CD4-positive, alpha-beta T cell (primary cell): ENCODE measurements at regions of chr3 and their contacts with region 1.

Region 1: DNA sequence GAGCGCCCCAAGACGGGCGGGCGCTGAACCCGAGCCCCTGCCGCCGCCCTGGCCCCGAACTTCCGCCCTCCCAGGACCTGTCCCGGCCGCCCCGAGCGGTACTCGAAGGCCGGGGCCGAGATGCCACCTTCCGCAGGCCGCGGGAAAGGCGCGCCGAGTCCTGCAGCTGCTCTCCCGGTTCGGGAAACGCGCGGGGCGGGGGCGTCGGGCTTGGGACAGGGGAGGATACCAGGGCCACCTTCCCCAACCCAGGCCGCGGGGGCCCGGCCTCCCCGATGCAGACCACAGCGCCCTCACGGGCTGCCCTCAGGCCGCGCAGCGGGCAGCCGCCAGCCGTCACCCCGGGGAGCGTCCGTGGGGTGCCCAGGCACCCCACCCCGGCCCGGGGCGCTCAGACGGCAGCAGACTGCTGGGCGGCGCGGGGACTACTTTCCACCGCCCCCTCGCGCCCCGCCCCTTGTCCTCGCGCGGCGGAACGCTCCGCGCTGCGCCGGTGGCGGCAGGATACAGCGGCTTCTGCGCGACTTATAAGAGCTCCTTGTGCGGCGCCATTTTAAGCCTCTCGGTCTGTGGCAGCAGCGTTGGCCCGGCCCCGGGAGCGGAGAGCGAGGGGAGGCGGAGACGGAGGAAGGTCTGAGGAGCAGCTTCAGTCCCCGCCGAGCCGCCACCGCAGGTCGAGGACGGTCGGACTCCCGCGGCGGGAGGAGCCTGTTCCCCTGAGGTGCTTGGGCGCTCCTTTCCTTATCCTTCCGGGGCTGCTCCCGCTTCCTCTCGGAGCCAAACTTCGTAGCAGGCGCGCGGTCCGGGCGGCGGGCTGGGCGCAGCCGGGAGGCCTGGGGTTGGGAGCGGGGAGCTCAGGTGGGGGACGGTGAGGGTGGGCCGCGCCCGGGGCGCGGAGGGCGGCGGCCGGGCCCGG is at the start of gene CTNNB1:
- DNase-seq: peak; percentile 86 to 97 (median 91)
- ATAC-seq: peak; percentile 81
- H3K4me3 ChIP-seq: peak within 1 kb of the TSS; percentile 90
- H3K4me3 Mint-ChIP-seq: peak within 1 kb of the TSS; percentile 98
- H3K27ac ChIP-seq: peak within 1 kb of the TSS; percentile 90
- H3K27ac Mint-ChIP-seq: peak within 1 kb of the TSS; percentile 94
- H3K4me1 ChIP-seq: peaks cover 16% of the 10 kb centered on the region
- H3K4me1 Mint-ChIP-seq: peaks cover 45% of the 10 kb centered on the region
- H3K27me3 ChIP-seq: no peaks in the 10 kb centered on the region
- H3K27me3 Mint-ChIP-seq: no peaks in the 10 kb centered on the region
- CTCF ChIP-seq: no peak
- total RNA-seq, gene CTNNB1: 226 to 228 TPM

Region 2: GRCh38 chr3:39406368-39407258 is 1792.6 kb before region 1 on chr3 and contains the start of gene RPSA:
- CTCF ChIA-PET with region 1: no interaction called
- POLR2A ChIA-PET with region 1: interaction called, 6 read pairs
- intact Hi-C with region 1: loop called in 1 of 2 experiments (anchors 10 kb)
- DNase-seq: peak; percentile 90 to 99 (median 94)
- ATAC-seq: peak; percentile 90
- H3K4me3 ChIP-seq: peak within 1 kb of the TSS; percentile 78
- H3K4me3 Mint-ChIP-seq: peak within 1 kb of the TSS; percentile 86
- H3K27ac ChIP-seq: peak within 1 kb of the TSS; percentile 76 to 88
- H3K27ac Mint-ChIP-seq: peak within 1 kb of the TSS; percentile 88
- H3K4me1 ChIP-seq: peaks cover 38% of the 10 kb centered on the region
- H3K4me1 Mint-ChIP-seq: peaks cover 48% of the 10 kb centered on the region
- H3K27me3 ChIP-seq: no peaks in the 10 kb centered on the region
- H3K27me3 Mint-ChIP-seq: no peaks in the 10 kb centered on the region
- CTCF ChIP-seq: peak; percentile 27
- total RNA-seq, gene RPSA: 1,930 to 1,974 TPM

Region 3: GRCh38 chr3:40524568-40525285 is 674.5 kb before region 1 on chr3 and contains the start of gene ZNF621:
- CTCF ChIA-PET with region 1: no interaction called
- POLR2A ChIA-PET with region 1: no interaction called
- intact Hi-C with region 1: loop called in 1 of 2 experiments (anchors 5 kb)
- DNase-seq: peak; percentile 60 to 89 (median 80)
- ATAC-seq: peak; percentile 93
- H3K4me3 ChIP-seq: peak within 1 kb of the TSS; percentile 80
- H3K4me3 Mint-ChIP-seq: peak within 1 kb of the TSS; percentile 96
- H3K27ac ChIP-seq: peak within 1 kb of the TSS; percentile 73 to 85
- H3K27ac Mint-ChIP-seq: peak within 1 kb of the TSS; percentile 88
- H3K4me1 ChIP-seq: peaks cover 20% of the 10 kb centered on the region
- H3K4me1 Mint-ChIP-seq: peaks cover 25% of the 10 kb centered on the region
- H3K27me3 ChIP-seq: no peaks in the 10 kb centered on the region
- H3K27me3 Mint-ChIP-seq: no peaks in the 10 kb centered on the region
- CTCF ChIP-seq: no peak
- total RNA-seq, gene ZNF621: 8.6 to 8.8 TPM

Region 4: GRCh38 chr3:41216993-41217392 is 17.8 kb after region 1 on chr3:
- CTCF ChIA-PET with region 1: interaction called, 6 read pairs
- POLR2A ChIA-PET with region 1: interaction called, 37 read pairs
- intact Hi-C with region 1: loop called in 1 of 2 experiments (anchors 2 kb)
- DNase-seq: no peak
- ATAC-seq: no peak
- H3K4me3 ChIP-seq: no peak overlapping the region
- H3K4me3 Mint-ChIP-seq: peak overlapping the region; percentile 8
- H3K27ac ChIP-seq: no peak overlapping the region
- H3K27ac Mint-ChIP-seq: peak overlapping the region; percentile 2
- H3K4me1 ChIP-seq: peaks cover 27% of the 10 kb centered on the region
- H3K4me1 Mint-ChIP-seq: peaks cover 94% of the 10 kb centered on the region
- H3K27me3 ChIP-seq: no peaks in the 10 kb centered on the region
- H3K27me3 Mint-ChIP-seq: no peaks in the 10 kb centered on the region
- CTCF ChIP-seq: no peak

Region 5: DNA sequence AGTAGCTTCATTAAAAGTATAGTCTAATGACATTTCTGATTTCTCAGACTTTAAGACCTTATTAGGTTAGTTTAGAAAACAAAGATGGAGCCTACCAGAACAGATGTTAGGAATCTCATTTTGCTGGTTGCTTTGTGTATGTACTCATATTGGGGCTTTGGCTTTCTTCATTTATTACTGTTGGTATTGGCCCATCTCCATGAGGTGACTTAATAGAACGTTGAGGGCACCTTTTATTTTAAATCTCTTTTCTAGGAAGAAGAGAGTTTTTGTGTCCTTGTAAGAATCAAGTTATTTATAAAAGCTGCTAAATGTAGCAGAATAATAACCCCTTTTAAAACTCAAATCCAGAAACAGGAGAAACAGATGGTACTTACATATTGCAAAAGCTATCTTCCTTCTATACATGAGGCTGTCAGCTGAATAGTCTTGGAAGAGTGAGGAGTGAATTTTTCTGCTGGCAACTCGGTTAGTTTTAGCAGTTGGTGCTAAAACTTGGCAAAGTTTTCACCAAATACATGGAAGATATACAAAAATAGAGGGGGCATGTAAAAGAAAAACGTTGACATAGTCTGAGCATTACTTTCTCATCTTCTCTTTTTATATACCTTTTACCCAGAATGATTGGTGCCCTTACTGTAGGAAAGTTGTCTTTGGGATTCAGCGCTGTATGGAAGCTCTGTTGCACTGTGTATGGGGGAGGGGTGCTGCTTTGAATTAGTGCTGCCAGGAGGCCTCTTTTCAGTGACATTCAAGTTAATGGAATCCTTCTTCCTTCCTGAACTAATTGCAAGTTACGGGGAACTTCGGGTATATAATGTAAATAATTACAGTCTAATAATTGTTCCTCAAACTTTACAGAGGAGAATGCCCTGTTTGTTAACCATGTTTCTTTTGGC is 35.9 kb after region 1 on chr3:
- CTCF ChIA-PET with region 1: no interaction called
- POLR2A ChIA-PET with region 1: interaction called, 8 read pairs
- intact Hi-C with region 1: loop called in 1 of 2 experiments (anchors 5 kb)
- DNase-seq: no peak
- ATAC-seq: no peak
- H3K4me3 ChIP-seq: no peak overlapping the region
- H3K4me3 Mint-ChIP-seq: no peak overlapping the region
- H3K27ac ChIP-seq: no peak overlapping the region
- H3K27ac Mint-ChIP-seq: no peak overlapping the region
- H3K4me1 ChIP-seq: no peaks in the 10 kb centered on the region
- H3K4me1 Mint-ChIP-seq: peaks cover 10% of the 10 kb centered on the region
- H3K27me3 ChIP-seq: no peaks in the 10 kb centered on the region
- H3K27me3 Mint-ChIP-seq: no peaks in the 10 kb centered on the region
- CTCF ChIP-seq: no peak

Region 6: DNA sequence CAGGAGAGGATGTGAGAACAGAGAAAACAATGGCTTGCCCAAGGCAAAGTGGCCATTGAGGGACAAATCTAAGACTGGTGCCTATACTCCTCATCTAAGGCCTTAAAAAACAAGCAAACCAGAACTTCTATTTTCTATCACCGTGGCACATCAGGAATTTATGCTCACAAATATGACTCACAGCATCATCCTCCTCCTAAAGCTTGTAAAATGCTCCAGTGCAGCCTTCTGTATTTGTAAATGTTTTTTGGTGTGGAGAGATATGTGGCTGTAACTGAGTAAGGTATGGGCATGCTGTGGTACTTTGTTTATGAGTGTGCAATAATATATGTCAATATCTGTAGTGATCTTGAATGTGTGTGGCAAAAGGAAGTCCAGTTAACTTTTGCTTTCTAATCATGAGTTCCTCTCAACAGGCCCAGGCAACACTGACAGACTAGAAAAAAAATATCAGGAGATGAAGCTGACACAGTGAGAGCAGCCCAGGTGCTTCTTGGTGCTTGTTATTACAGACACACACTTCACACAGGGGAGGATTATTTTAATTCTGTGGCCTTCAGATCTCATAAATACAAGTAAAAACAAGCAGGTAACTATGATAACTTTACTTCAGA is 60.3 kb after region 1 on chr3:
- CTCF ChIA-PET with region 1: no interaction called
- POLR2A ChIA-PET with region 1: no interaction called
- intact Hi-C with region 1: no loop called
- DNase-seq: no peak
- ATAC-seq: no peak
- H3K4me3 ChIP-seq: no peak overlapping the region
- H3K4me3 Mint-ChIP-seq: no peak overlapping the region
- H3K27ac ChIP-seq: no peak overlapping the region
- H3K27ac Mint-ChIP-seq: no peak overlapping the region
- H3K4me1 ChIP-seq: no peaks in the 10 kb centered on the region
- H3K4me1 Mint-ChIP-seq: no peaks in the 10 kb centered on the region
- H3K27me3 ChIP-seq: no peaks in the 10 kb centered on the region
- H3K27me3 Mint-ChIP-seq: no peaks in the 10 kb centered on the region
- CTCF ChIP-seq: no peak